Activated CD4-positive, alpha-beta T cell treated with anti-CD3 and anti-CD28 coated beads, Interleukin-2, amount 10 ng/mL, durations not matched to agents 24 days and 14 days (primary cell): ENCODE measurements at regions of chr2 and their contacts with region 1.

Region 1: DNA sequence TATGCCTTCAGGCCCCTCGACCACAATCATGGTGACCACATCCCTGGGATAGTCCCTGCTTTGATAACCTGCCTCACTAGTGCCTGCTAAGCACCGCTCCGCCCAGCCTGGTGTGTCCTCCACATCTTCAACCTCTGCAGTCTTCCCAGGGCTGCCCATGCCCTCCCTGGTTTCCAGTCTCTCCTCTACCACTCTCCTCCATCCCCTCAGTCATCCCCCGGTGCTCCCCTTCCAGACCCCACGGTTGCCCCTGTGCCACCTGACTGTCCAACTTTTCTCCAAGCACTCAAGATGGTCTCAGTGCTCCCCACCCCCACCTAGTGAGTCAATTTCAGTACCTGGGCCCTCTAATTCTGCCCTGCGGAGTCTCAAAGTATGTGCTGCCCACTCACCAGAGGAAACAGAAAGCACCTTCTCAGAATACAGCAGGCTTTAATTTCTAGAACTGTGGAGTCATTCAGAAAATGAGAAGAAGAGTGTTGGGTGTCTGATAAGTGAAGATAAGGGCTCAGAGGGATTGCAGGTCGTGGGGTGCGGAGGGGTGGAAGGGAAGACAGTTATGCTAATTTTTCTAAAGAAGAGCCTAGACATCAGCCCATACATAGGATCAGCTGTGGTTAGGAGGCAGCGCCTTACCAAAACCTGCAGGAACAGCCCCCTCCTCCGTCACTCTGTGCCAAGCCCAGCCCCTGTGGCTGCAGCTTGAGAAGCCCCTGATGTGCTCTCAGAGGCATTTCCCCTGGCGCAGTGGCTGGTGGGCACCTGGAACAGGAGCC is 53.6 kb upstream of the CAB39 start:
- DNase-seq: peak; percentile 91
- H3K4me3 Mint-ChIP-seq: peak overlapping the region; percentile 88
- H3K27ac Mint-ChIP-seq: peak overlapping the region; percentile 98
- H3K4me1 Mint-ChIP-seq: peaks cover 82% of the 10 kb centered on the region
- H3K27me3 Mint-ChIP-seq: no peaks in the 10 kb centered on the region

Region 2: DNA sequence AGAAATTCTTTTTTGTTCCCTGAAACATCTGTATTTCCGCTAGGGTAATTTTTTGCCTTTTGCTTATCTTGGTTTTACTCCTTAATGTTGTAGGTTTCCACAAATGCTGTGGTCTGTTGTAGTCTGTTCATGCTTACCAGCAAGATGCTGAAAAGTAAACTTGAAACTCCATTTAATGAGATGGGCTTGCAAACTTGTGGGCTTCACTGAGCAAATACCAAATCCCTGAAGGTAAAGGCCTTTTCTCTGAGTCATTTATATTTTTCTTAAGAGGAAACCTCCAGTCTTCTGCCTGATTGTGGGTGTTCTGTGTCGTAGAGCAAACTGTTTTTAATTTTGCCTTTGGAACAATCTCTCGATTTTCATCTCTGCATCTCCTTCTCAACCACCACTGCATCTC is 424.2 kb before region 1 on chr2:
- intact Hi-C with region 1: loop called (anchors 2 kb)
- DNase-seq: peak; percentile 57
- H3K4me3 Mint-ChIP-seq: peak overlapping the region; percentile 78
- H3K27ac Mint-ChIP-seq: peak overlapping the region; percentile 97
- H3K4me1 Mint-ChIP-seq: peaks cover 44% of the 10 kb centered on the region
- H3K27me3 Mint-ChIP-seq: no peaks in the 10 kb centered on the region

Region 3: GRCh38 chr2:230286048-230286447 is 373.0 kb before region 1 on chr2:
- intact Hi-C with region 1: loop called (anchors 1 kb)
- DNase-seq: no peak
- H3K4me3 Mint-ChIP-seq: no peak overlapping the region
- H3K27ac Mint-ChIP-seq: no peak overlapping the region
- H3K4me1 Mint-ChIP-seq: peaks cover 25% of the 10 kb centered on the region
- H3K27me3 Mint-ChIP-seq: no peaks in the 10 kb centered on the region

Region 4: DNA sequence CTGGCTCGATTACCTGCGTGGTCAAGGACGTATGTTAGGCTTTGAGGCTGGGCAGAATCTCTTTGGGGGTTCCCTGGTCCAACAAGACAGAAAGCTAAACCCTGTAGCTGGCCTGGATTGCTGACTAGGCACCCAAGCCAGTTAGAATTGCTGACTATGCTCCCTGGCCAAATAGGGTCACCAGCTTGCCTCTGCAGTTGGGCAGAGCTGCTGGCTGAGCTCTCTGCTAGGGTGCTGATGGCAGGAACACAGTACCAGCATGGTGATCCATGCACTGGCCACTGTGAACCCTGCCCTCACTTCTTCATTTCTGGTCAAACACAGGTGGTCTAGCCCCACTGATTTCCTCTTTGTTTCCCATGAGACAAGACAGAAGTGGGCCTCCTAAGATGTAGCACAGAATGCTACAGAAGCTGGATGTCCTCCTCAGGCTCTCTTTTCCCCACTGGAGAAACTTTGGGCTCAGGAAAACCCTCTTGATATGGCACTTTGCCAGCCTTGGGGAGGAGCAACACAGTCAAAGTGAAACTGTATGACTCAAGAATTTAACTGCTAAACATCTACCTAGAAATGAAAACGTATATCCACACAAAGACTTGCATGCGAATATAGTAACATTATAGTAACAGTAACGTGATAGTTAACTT is 311.3 kb before region 1 on chr2:
- intact Hi-C with region 1: loop called (anchors 2 kb)
- DNase-seq: peak; percentile 86
- H3K4me3 Mint-ChIP-seq: peak overlapping the region; percentile 62
- H3K27ac Mint-ChIP-seq: peak overlapping the region; percentile 93
- H3K4me1 Mint-ChIP-seq: peaks cover 59% of the 10 kb centered on the region
- H3K27me3 Mint-ChIP-seq: no peaks in the 10 kb centered on the region

Region 5: DNA sequence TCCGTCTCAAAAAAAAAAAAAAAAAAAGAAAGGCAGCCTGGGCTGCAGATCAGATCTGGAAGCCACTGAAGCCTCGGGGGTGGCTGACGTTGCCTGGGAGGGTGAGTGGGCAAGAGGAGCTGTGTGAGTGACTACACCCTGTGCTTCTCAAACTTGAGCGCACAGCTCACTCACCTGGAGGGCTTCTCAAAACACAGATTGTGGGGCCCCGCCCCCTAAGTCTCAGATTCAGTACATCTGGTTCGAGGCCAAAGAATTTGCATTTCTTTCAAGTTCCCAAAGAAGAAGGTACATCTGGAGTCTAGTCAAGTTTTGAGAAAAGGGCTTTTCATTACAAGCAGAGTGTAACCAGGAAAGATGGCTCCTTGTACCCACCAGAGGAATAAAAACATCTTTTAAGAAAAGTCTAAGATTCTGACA is 44.1 kb before region 1 on chr2:
- intact Hi-C with region 1: loop called (anchors 1 kb)
- DNase-seq: peak; percentile 79
- H3K4me3 Mint-ChIP-seq: peak overlapping the region; percentile 15
- H3K27ac Mint-ChIP-seq: peak overlapping the region; percentile 51
- H3K4me1 Mint-ChIP-seq: peaks cover 45% of the 10 kb centered on the region
- H3K27me3 Mint-ChIP-seq: no peaks in the 10 kb centered on the region

Region 6: GRCh38 chr2:230627806-230628724 is 31.0 kb before region 1 on chr2:
- intact Hi-C with region 1: no loop called
- DNase-seq: no peak
- H3K4me3 Mint-ChIP-seq: no peak overlapping the region
- H3K27ac Mint-ChIP-seq: no peak overlapping the region
- H3K4me1 Mint-ChIP-seq: peaks cover 17% of the 10 kb centered on the region
- H3K27me3 Mint-ChIP-seq: no peaks in the 10 kb centered on the region

Region 7: DNA sequence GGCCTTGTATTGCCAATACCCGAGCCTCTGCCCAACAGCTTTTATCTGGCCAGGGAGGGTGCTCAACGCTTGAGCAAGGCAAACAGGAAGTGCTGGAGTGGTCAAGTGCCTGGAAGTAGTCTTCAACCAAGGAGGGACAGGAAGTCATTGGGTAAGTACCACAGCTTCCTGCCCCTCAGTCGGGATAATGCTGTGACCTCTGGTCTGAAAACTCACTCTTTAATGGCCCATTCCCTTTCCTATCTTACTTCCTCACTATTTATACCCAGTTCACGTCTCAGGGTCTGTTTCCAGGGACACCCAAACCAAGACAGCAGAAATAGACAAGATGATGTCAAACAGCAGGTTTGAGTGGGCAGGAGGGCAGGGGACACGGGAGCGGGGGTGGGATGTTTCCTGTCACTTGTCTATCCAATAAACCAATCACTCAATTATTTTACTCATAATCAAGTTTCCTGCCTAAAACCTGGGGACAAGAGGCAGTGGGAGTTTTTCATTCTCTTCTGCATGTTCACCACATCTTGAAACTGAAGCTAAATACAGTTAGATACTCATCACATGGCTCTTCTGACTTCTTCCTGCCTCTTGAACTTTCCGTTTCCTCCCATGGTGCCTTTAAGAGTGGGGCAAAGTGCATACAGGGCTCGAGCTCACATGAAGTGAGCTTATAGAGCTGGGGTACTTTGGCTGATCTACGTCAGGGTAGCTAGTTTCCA is 15.3 kb before region 1 on chr2:
- intact Hi-C with region 1: loop called (anchors 1 kb)
- DNase-seq: peak; percentile 87
- H3K4me3 Mint-ChIP-seq: peak overlapping the region; percentile 28
- H3K27ac Mint-ChIP-seq: peak overlapping the region; percentile 90
- H3K4me1 Mint-ChIP-seq: peaks cover 24% of the 10 kb centered on the region
- H3K27me3 Mint-ChIP-seq: no peaks in the 10 kb centered on the region

Region 8: GRCh38 chr2:230793572-230794359 is 134.7 kb after region 1 on chr2:
- intact Hi-C with region 1: loop called (anchors 1 kb)
- DNase-seq: peak; percentile 91
- H3K4me3 Mint-ChIP-seq: peak overlapping the region; percentile 65
- H3K27ac Mint-ChIP-seq: peak overlapping the region; percentile 95
- H3K4me1 Mint-ChIP-seq: peaks cover 43% of the 10 kb centered on the region
- H3K27me3 Mint-ChIP-seq: no peaks in the 10 kb centered on the region